B cell (primary cell): ENCODE measurements at regions of chr1 and their contacts with region 1.

Region 1: GRCh38 chr1:52365746-52366516 is at the start of gene CC2D1B:
- DNase-seq: peak; percentile 100
- ATAC-seq: peak; percentile 92
- H3K4me3 ChIP-seq: peak within 1 kb of the TSS; percentile 73 to 88 (median 79)
- H3K4me3 Mint-ChIP-seq: peak within 1 kb of the TSS; percentile 96
- H3K27ac ChIP-seq: peak within 1 kb of the TSS; percentile 71 to 90
- H3K27ac Mint-ChIP-seq: peak within 1 kb of the TSS; percentile 93
- H3K4me1 ChIP-seq: peaks cover 18 to 20% of the 10 kb centered on the region in 2 donors
- H3K4me1 Mint-ChIP-seq: peaks cover 34% of the 10 kb centered on the region
- H3K27me3 ChIP-seq: no peaks in the 10 kb centered on the region
- H3K27me3 Mint-ChIP-seq: peaks cover 4% of the 10 kb centered on the region
- CTCF ChIP-seq: no peak
- total RNA-seq, gene CC2D1B: 79.7 and 80.4 TPM in 2 replicates

Region 2: GRCh38 chr1:50968158-50968820 is 1397.6 kb before region 1 on chr1:
- CTCF ChIA-PET with region 1: no interaction called
- POLR2A ChIA-PET with region 1: no interaction called
- intact Hi-C with region 1: loop called (anchors 5 kb)
- DNase-seq: peak; percentile 89
- ATAC-seq: peak; percentile 81
- H3K4me3 ChIP-seq: peak overlapping the region; percentile 73 to 98 (median 87)
- H3K4me3 Mint-ChIP-seq: peak overlapping the region; percentile 97
- H3K27ac ChIP-seq: peak overlapping the region; percentile 77 to 83
- H3K27ac Mint-ChIP-seq: peak overlapping the region; percentile 93
- H3K4me1 ChIP-seq: peaks cover 20 to 26% of the 10 kb centered on the region in 2 donors
- H3K4me1 Mint-ChIP-seq: peaks cover 24% of the 10 kb centered on the region
- H3K27me3 ChIP-seq: peaks cover 0 to 27% (median 11%) of the 10 kb centered on the region in 4 experiments
- H3K27me3 Mint-ChIP-seq: peaks cover 13% of the 10 kb centered on the region
- CTCF ChIP-seq: peak; percentile 62

Region 3: GRCh38 chr1:52056163-52056936 is 309.6 kb before region 1 on chr1 and contains the start of gene BTF3L4:
- CTCF ChIA-PET with region 1: no interaction called
- POLR2A ChIA-PET with region 1: interaction called, 3 read pairs
- intact Hi-C with region 1: loop called (anchors 1 kb)
- DNase-seq: peak; percentile 93
- ATAC-seq: peak; percentile 89
- H3K4me3 ChIP-seq: peak within 1 kb of the TSS; percentile 73 to 99 (median 95)
- H3K4me3 Mint-ChIP-seq: peak within 1 kb of the TSS; percentile 98
- H3K27ac ChIP-seq: peak within 1 kb of the TSS; percentile 85 to 92
- H3K27ac Mint-ChIP-seq: peak within 1 kb of the TSS; percentile 97
- H3K4me1 ChIP-seq: peaks cover 25 to 31% of the 10 kb centered on the region in 2 donors
- H3K4me1 Mint-ChIP-seq: peaks cover 53% of the 10 kb centered on the region
- H3K27me3 ChIP-seq: no peaks in the 10 kb centered on the region
- H3K27me3 Mint-ChIP-seq: no peaks in the 10 kb centered on the region
- CTCF ChIP-seq: peak; percentile 17
- total RNA-seq, gene BTF3L4: 32.7 and 33.8 TPM in 2 replicates

Region 4: DNA sequence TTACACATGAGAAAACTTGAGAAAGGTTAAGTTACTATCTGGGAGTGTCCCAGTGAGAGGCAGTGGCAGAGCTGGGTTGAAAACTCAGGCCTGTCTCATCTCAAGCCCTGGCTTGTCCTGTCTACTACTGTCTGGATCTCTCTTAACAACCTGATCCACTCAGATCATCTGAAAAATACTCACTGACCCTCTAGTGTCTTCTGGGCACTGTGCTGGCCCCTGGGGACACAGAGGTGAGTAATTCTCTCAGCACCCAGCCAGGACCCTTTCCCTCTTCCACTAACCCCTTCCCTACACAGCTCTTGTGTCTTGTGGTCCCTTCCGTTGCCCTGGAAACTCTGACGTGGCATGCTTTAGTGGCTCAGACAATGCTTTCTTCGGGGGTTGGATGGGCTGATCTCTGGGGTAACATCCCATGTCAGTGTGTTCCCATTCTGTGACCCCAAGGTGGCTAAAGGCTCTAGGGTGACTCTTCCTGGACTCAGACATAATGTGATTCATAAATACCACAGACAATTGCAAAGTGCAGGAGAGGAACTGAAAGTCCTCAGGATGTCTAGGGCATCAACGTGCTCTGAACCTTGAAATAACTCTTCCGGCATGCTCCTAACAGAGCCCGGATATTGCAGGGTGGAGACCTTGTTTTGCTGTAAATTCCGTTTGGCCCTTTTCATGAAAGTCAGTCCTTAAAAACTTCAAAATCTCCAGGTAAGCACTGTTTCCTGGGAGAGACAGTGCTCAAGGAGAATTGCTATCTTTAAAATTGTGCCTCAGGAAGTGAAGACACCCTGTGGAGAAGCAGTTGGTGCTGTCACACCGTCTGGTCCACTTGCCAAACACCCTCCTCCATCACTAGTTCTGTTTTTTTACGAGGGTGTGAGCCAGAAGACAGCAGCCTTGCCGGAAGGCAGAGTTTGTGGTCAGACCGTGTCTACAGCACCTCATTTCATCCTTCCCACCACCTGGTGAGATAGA is 271.1 kb after region 1 on chr1:
- CTCF ChIA-PET with region 1: no interaction called
- POLR2A ChIA-PET with region 1: no interaction called
- intact Hi-C with region 1: loop called (anchors 1 kb)
- DNase-seq: peak; percentile 95
- ATAC-seq: peak; percentile 69
- H3K4me3 ChIP-seq: peak overlapping the region; percentile 25 to 50 (median 39)
- H3K4me3 Mint-ChIP-seq: peak overlapping the region; percentile 91
- H3K27ac ChIP-seq: peak overlapping the region; percentile 86 to 99
- H3K27ac Mint-ChIP-seq: peak overlapping the region; percentile 100
- H3K4me1 ChIP-seq: peaks cover 85 to 92% of the 10 kb centered on the region in 2 donors
- H3K4me1 Mint-ChIP-seq: peaks cover 79% of the 10 kb centered on the region
- H3K27me3 ChIP-seq: no peaks in the 10 kb centered on the region
- H3K27me3 Mint-ChIP-seq: no peaks in the 10 kb centered on the region
- CTCF ChIP-seq: no peak

Region 5: DNA sequence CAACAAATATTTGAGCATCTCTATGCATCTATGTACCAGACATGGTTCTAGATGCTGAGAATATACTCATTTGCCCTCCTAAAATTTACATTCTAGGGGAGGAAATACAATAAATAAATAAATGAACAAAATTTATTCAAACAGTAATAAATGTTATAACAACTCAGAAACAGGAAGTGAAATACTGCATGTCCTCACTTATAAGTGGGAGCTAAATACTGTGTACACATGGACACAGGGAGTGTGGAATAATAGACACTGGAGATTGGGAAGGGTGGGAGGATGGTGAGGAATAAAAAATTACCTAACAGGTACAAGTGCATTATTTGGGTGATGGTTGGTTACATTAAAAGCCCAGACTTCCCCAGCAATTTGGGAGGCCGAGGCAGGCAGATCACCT is 327.9 kb after region 1 on chr1:
- CTCF ChIA-PET with region 1: no interaction called
- POLR2A ChIA-PET with region 1: no interaction called
- intact Hi-C with region 1: no loop called
- DNase-seq: no peak
- ATAC-seq: no peak
- H3K4me3 ChIP-seq: no peak overlapping the region
- H3K4me3 Mint-ChIP-seq: no peak overlapping the region
- H3K27ac ChIP-seq: no peak overlapping the region
- H3K27ac Mint-ChIP-seq: no peak overlapping the region
- H3K4me1 ChIP-seq: peaks cover 4 to 17% of the 10 kb centered on the region in 2 donors
- H3K4me1 Mint-ChIP-seq: peaks cover 24% of the 10 kb centered on the region
- H3K27me3 ChIP-seq: no peaks in the 10 kb centered on the region
- H3K27me3 Mint-ChIP-seq: no peaks in the 10 kb centered on the region
- CTCF ChIP-seq: no peak

Region 6: DNA sequence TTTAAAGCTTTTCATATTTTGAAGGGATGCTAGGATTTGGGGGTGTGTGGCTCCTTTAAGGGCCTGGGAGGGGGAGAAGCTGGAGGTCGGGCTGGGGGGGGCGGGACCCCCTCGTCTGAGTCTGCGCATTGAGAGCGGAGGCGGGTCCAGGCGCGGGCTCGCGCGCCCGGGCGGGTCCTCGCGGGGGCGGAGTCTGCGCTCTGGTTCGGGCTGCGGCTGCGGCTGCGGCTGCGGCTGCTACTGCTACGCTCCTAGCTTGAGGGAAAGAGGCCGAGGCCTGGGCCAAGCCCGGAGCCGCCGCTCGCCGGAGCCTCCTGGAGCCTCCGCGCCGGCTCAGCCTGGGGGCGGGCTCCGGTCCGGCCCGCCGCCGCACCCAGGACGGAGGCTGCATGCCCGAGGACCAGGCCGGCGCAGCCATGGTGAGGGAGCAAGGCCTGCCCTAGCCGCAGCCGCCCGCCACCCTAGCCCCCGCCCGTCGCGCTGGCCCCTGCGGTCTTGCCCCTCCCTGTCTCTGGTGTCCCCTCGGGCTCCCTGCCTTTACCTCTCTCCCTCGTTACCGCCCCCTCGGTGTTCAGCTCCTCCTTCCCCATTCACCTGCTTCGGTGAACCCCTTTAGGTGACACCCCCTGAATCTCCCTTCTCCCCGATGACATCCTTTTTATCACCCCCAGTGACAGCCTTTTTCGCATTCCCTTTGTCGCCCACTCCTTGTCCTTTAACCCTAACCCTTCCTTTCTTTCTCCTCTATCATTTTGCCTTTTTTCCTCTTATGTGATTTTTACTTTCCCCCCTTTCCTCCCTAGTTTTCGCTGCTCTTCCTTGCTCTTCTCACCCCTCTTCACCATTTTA is 360.6 kb after region 1 on chr1 and contains the start of gene ZYG11B:
- CTCF ChIA-PET with region 1: interaction called, 3 read pairs
- POLR2A ChIA-PET with region 1: no interaction called
- intact Hi-C with region 1: loop called (anchors 1 kb)
- DNase-seq: peak; percentile 95
- ATAC-seq: peak; percentile 95
- H3K4me3 ChIP-seq: peak within 1 kb of the TSS; percentile 56 to 92 (median 76)
- H3K4me3 Mint-ChIP-seq: peak within 1 kb of the TSS; percentile 95
- H3K27ac ChIP-seq: peak within 1 kb of the TSS in 1 of 2 donors; percentile 66
- H3K27ac Mint-ChIP-seq: peak within 1 kb of the TSS; percentile 88
- H3K4me1 ChIP-seq: peaks cover 8 to 12% of the 10 kb centered on the region in 2 donors
- H3K4me1 Mint-ChIP-seq: peaks cover 35% of the 10 kb centered on the region
- H3K27me3 ChIP-seq: no peaks in the 10 kb centered on the region
- H3K27me3 Mint-ChIP-seq: peaks cover 4% of the 10 kb centered on the region
- CTCF ChIP-seq: no peak
- total RNA-seq, gene ZYG11B: 22.3 and 22.7 TPM in 2 replicates

Region 7: DNA sequence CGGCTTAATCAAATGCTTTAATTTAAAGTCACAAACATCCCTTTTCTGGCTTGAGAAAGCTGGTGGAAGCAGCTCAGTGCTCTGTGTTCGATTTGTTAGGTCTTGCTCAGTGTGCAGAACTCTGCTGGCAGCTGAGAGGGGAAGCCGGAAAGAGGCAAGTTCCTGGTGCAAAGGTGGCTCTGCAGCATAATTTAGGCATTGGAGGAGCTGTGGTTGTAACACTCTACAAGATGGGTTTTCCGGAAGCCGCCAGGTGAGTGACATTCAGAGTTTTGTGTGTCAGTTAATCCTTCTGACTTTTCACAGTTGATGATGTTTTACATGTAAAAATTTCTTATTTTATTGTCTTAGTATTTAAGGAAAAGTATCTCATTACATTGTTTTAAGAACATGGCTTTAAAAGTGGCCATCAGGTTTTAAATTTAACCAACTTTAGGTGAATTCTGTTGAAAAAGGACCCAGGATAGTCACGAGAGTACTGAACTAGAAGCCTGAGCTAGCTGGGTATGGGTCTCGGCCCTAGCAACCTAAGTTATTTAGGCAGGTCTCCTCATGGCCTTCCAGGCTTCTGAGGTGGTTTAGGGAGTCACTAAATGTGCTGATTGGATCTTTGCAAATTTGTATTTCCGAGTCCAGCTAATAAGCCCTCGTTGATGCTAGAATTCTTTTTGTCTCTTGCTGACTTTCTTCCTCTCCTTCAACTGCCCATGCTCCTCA is 649.0 kb after region 1 on chr1:
- CTCF ChIA-PET with region 1: no interaction called
- POLR2A ChIA-PET with region 1: no interaction called
- intact Hi-C with region 1: loop called (anchors 10 kb)
- DNase-seq: peak; percentile 86
- ATAC-seq: peak; percentile 96
- H3K4me3 ChIP-seq: peak overlapping the region; percentile 45 to 88 (median 62)
- H3K4me3 Mint-ChIP-seq: peak overlapping the region; percentile 87
- H3K27ac ChIP-seq: peak overlapping the region in 1 of 2 donors; percentile 13
- H3K27ac Mint-ChIP-seq: peak overlapping the region; percentile 62
- H3K4me1 ChIP-seq: peaks cover 19 to 20% of the 10 kb centered on the region in 2 donors
- H3K4me1 Mint-ChIP-seq: peaks cover 27% of the 10 kb centered on the region
- H3K27me3 ChIP-seq: no peaks in the 10 kb centered on the region
- H3K27me3 Mint-ChIP-seq: no peaks in the 10 kb centered on the region
- CTCF ChIP-seq: no peak

Region 8: DNA sequence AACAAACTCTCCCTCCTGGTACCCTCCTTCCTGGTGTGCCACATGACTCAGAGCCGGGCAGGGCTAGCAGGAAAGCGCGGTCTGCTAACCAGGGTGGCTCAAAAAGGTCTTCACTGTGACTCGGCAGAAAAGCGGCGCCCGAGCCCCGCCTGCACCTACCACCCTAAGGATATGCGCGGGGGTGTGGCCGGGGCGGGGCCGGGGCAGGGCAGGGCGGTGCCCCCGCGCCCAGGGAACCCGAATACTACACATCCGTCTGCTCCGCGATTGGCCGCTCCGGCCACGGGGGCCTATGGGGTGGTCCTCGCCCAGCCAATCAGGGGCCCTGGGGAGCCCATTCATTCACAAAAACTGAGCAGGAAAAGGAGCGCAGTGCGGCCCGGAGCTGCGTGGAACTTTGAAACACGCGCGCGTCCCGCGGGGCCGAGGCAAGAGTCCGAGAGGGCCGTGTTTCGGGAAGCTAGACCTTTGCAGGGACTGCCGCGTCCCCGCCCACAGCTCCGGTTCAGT is 960.2 kb after region 1 on chr1:
- CTCF ChIA-PET with region 1: no interaction called
- POLR2A ChIA-PET with region 1: no interaction called
- intact Hi-C with region 1: loop called (anchors 5 kb)
- DNase-seq: peak; percentile 92
- ATAC-seq: peak; percentile 88
- H3K4me3 ChIP-seq: peak overlapping the region in 4 of 5 experiments; percentile 80 to 96 (median 86)
- H3K4me3 Mint-ChIP-seq: peak overlapping the region; percentile 97
- H3K27ac ChIP-seq: peak overlapping the region in 1 of 2 donors; percentile 21
- H3K27ac Mint-ChIP-seq: peak overlapping the region; percentile 91
- H3K4me1 ChIP-seq: peaks cover 6 to 25% of the 10 kb centered on the region in 2 donors
- H3K4me1 Mint-ChIP-seq: peaks cover 24% of the 10 kb centered on the region
- H3K27me3 ChIP-seq: no peaks in the 10 kb centered on the region
- H3K27me3 Mint-ChIP-seq: no peaks in the 10 kb centered on the region
- CTCF ChIP-seq: no peak